AG04450 (cell line): ENCODE measurements at regions of chr9 and their contacts with region 1.

Region 1: GRCh38 chr9:136213733-136214132 is 8.8 kb upstream of the LHX3 start:
- DNase-seq: no peak
- H3K4me3 ChIP-seq: no peak overlapping the region
- H3K27ac ChIP-seq: no peak overlapping the region
- H3K27me3 ChIP-seq: no peaks in the 10 kb centered on the region
- CTCF ChIP-seq: no peak

Region 2: DNA sequence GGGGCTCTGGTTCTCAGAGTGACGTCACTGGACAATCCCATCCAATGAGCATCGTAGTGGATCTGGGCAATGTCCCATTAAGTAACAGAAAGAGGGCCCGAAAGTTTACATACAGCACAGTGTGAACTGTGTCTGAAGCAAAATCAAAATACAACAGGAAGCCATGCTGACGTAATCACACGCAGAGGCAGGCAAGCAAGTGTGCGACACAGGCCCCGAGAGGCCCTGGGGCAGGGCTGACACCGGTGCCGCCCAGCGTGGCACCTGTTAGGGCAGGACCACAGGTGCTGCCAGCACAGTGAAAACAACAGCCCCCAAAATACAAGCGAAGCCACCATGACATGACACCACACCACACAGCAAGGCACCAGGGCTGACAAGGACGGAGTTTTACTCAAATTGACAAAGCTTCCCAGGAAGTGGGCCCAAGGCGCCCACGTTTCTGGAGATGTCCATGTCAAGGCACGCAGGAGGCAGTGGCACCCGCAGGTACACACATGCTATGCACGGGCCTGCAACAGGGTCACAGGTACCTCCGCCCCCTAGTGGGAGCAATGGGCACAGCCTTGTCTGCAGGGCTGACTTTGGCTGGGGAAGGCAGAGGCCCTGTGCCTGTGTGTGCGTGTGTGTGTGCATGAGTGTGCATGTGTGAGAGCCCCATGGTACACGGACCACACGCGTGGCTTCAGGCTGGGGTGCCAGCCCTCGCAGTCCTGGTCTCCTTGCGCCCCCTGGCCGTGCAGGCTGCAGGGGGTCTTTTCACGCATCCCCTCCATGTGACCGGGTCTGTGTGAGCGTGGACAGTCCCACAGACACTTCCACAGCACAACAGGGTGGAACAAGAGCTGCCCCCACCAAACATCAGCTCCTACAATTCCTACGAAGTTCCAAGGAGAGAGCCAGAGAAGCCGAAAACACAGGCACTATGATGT is 12.3 kb after region 1 on chr9:
- CTCF ChIA-PET with region 1: interaction called, 10 read pairs
- POLR2A ChIA-PET with region 1: no interaction called
- DNase-seq: no peak
- H3K4me3 ChIP-seq: no peak overlapping the region
- H3K27ac ChIP-seq: no peak overlapping the region
- H3K27me3 ChIP-seq: no peaks in the 10 kb centered on the region
- CTCF ChIP-seq: peak; percentile 86